B cell (primary cell): ENCODE measurements at regions of chr1 and their contacts with region 1.

Region 1: GRCh38 chr1:91054780-91055481 is 33.1 kb upstream of the ZNF644 start:
- DNase-seq: peak; percentile 69
- ATAC-seq: peak; percentile 87
- H3K4me3 ChIP-seq: peak overlapping the region in 1 of 5 experiments; percentile 34
- H3K4me3 Mint-ChIP-seq: no peak overlapping the region
- H3K27ac ChIP-seq: peak overlapping the region; percentile 48 to 73
- H3K27ac Mint-ChIP-seq: no peak overlapping the region
- H3K4me1 ChIP-seq: peaks cover 50 to 62% of the 10 kb centered on the region in 2 donors
- H3K4me1 Mint-ChIP-seq: peaks cover 9% of the 10 kb centered on the region
- H3K27me3 ChIP-seq: no peaks in the 10 kb centered on the region
- H3K27me3 Mint-ChIP-seq: no peaks in the 10 kb centered on the region
- CTCF ChIP-seq: no peak

Region 2: DNA sequence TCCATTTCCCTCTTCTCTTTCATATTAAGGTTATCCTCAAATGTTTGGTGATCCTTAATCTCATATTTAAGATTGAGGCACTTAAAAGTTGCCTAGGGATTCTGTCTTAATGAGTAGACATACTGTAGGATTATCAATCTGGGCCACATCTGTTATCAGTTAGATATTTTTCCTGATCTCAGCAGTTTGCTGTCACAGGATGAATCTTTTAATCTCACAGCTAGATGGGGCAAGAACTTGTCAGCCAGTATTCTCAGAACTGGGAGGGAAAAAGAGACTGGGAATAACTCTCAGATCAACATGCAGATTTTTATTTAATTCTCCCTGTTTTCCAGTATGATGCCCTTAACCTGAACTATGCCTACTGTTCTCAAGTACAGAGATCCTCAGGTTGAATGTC is 47.1 kb before region 1 on chr1:
- CTCF ChIA-PET with region 1: interaction called, 4 read pairs
- POLR2A ChIA-PET with region 1: no interaction called
- intact Hi-C with region 1: loop called (anchors 10 kb)
- DNase-seq: no peak
- ATAC-seq: no peak
- H3K4me3 ChIP-seq: no peak overlapping the region
- H3K4me3 Mint-ChIP-seq: no peak overlapping the region
- H3K27ac ChIP-seq: no peak overlapping the region
- H3K27ac Mint-ChIP-seq: no peak overlapping the region
- H3K4me1 ChIP-seq: peaks cover 7 to 39% of the 10 kb centered on the region in 2 donors
- H3K4me1 Mint-ChIP-seq: peaks cover 74% of the 10 kb centered on the region
- H3K27me3 ChIP-seq: no peaks in the 10 kb centered on the region
- H3K27me3 Mint-ChIP-seq: no peaks in the 10 kb centered on the region
- CTCF ChIP-seq: no peak

Region 3: DNA sequence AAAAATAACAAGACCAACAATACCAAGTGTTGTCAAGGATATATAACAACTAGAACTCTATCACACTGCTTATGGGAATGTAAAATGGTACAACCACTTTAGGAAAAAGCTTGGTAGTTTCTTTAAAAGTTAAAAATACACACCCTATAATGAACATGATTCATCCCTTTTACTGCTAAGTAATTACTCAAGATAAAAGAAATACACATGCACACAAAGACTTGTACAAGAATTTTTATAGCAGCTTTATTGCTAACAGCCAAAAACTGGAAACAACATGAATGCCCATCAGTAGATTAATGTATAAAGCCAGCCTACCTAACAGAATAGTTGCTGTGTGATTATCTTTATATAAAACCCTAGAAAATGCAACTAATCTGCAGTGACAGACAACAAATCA is 22.6 kb before region 1 on chr1:
- CTCF ChIA-PET with region 1: interaction called, 5 read pairs
- POLR2A ChIA-PET with region 1: no interaction called
- intact Hi-C with region 1: loop called (anchors 1 kb)
- DNase-seq: no peak
- ATAC-seq: no peak
- H3K4me3 ChIP-seq: no peak overlapping the region
- H3K4me3 Mint-ChIP-seq: no peak overlapping the region
- H3K27ac ChIP-seq: no peak overlapping the region
- H3K27ac Mint-ChIP-seq: no peak overlapping the region
- H3K4me1 ChIP-seq: no peaks in the 10 kb centered on the region
- H3K4me1 Mint-ChIP-seq: no peaks in the 10 kb centered on the region
- H3K27me3 ChIP-seq: peaks cover 0 to 5% (median 0%) of the 10 kb centered on the region in 4 experiments
- H3K27me3 Mint-ChIP-seq: peaks cover 11% of the 10 kb centered on the region
- CTCF ChIP-seq: no peak